Calu3 (cell line): ENCODE measurements at regions of chr10 and their contacts with region 1.

Region 1: DNA sequence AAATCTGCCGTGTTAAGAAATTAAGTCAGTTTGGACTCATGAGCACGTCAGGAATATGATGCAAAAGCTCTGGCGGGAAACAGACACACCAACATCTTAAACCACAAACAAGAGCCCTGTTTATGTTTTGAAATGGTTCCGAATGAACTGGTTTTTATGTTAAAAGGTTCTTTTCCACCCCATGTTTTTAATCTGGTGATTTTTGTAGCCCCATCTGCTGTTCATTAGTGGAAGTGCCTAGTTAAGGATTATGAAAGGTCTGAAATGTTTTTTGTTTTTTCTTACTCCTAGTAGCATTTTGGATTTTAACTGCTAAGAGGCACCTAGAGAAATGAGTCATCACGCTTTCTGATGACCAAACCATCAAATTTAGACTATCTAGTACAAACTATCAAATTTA is 404.1 kb upstream of the MKI67 start:
- DNase-seq: no peak
- H3K4me3 Mint-ChIP-seq: no peak overlapping the region
- H3K27ac Mint-ChIP-seq: no peak overlapping the region
- H3K4me1 Mint-ChIP-seq: no peaks in the 10 kb centered on the region
- H3K27me3 Mint-ChIP-seq: no peaks in the 10 kb centered on the region
- CTCF ChIP-seq: no peak

Region 2: DNA sequence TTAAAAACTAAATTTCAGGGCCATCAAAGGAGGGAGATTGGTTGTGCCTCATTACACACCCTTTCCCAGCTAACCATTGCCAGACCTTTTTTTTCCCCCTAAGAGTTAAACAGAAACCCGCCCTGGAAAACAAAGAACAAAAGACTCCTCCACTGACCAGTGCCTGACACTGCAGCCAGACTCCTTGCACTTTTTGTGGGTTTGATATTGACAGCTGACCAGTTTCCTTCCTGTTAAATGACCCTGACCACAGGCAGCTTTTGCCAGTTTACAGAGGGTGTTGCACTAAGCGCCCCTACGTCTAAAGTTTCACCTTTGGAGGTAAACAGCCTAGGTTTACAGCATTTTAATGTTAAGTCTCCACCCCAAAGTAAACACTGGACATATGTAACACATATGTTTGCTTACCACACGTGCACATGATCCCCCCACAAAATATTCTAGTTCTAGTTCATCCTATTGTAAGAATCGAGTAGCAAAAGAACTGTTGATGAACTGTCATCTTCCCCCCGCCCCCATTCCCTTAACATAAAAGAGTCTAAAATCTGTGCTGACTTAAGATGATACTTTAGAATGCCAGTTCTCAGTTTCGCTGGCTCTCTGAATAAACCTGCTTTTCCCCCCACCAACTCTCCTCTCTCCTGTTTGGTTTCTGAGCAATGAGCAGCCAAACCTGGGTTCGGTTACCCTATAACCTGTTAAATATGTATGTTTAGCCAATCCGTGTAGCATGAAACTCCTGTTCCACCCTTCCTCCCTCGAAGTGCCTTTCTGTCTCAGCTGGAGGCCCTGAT is 755.3 kb before region 1 on chr10:
- CTCF ChIA-PET with region 1: no interaction called
- intact Hi-C with region 1: no loop called
- DNase-seq: peak; percentile 28
- H3K4me3 Mint-ChIP-seq: no peak overlapping the region
- H3K27ac Mint-ChIP-seq: no peak overlapping the region
- H3K4me1 Mint-ChIP-seq: no peaks in the 10 kb centered on the region
- H3K27me3 Mint-ChIP-seq: peaks cover 4% of the 10 kb centered on the region
- CTCF ChIP-seq: no peak

Region 3: GRCh38 chr10:128263891-128264688 is 266.2 kb before region 1 on chr10:
- CTCF ChIA-PET with region 1: no interaction called
- intact Hi-C with region 1: loop called (anchors 10 kb)
- DNase-seq: peak; percentile 66
- H3K4me3 Mint-ChIP-seq: no peak overlapping the region
- H3K27ac Mint-ChIP-seq: no peak overlapping the region
- H3K4me1 Mint-ChIP-seq: no peaks in the 10 kb centered on the region
- H3K27me3 Mint-ChIP-seq: peaks cover 39% of the 10 kb centered on the region
- CTCF ChIP-seq: peak; percentile 41

Region 4: DNA sequence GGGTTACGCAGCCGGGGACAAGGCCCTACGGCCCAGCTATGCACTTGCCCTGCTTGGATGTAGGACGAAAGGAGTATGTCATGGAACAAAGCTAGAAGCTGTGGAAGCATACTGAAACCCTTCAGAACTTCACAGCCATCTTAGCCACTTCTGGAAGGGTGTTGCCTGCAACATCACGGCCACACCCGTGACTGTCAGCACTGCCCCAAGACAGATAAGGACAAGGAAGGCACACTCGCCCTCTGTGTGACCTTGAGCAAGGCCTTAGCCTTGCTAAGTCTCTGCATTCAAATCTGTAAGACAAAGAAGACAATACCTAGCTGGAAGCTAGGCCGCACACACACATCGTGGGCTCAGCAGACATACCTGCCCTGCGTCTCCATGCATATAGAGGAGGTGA is 584.3 kb after region 1 on chr10:
- CTCF ChIA-PET with region 1: no interaction called
- intact Hi-C with region 1: no loop called
- DNase-seq: no peak
- H3K4me3 Mint-ChIP-seq: no peak overlapping the region
- H3K27ac Mint-ChIP-seq: no peak overlapping the region
- H3K4me1 Mint-ChIP-seq: no peaks in the 10 kb centered on the region
- H3K27me3 Mint-ChIP-seq: no peaks in the 10 kb centered on the region
- CTCF ChIP-seq: no peak